Ascending aorta (tissue), 2 donors: ENCODE measurements at regions of chr7 and their contacts with region 1.

Region 1: GRCh38 chr7:98617051-98617959 is at the start of gene NPTX2:
- DNase-seq: peak in 1 of 2 donors; percentile 85
- H3K4me3 ChIP-seq: peak within 1 kb of the TSS; percentile 60 to 76
- H3K27ac ChIP-seq: peak within 1 kb of the TSS; percentile 46 to 57
- H3K4me1 ChIP-seq: peaks cover 4 to 11% of the 10 kb centered on the region in 2 donors
- H3K27me3 ChIP-seq: no peaks in the 10 kb centered on the region
- CTCF ChIP-seq: peak; percentile 18 to 50 (median 30)
- total RNA-seq, gene NPTX2: 44.2 TPM

Region 2: GRCh38 chr7:98434095-98434494 is 183.2 kb before region 1 on chr7:
- intact Hi-C with region 1: loop called (anchors 5 kb)
- DNase-seq: no peak
- H3K4me3 ChIP-seq: no peak overlapping the region
- H3K27ac ChIP-seq: no peak overlapping the region
- H3K4me1 ChIP-seq: no peaks in the 10 kb centered on the region
- H3K27me3 ChIP-seq: no peaks in the 10 kb centered on the region
- CTCF ChIP-seq: no peak

Region 3: DNA sequence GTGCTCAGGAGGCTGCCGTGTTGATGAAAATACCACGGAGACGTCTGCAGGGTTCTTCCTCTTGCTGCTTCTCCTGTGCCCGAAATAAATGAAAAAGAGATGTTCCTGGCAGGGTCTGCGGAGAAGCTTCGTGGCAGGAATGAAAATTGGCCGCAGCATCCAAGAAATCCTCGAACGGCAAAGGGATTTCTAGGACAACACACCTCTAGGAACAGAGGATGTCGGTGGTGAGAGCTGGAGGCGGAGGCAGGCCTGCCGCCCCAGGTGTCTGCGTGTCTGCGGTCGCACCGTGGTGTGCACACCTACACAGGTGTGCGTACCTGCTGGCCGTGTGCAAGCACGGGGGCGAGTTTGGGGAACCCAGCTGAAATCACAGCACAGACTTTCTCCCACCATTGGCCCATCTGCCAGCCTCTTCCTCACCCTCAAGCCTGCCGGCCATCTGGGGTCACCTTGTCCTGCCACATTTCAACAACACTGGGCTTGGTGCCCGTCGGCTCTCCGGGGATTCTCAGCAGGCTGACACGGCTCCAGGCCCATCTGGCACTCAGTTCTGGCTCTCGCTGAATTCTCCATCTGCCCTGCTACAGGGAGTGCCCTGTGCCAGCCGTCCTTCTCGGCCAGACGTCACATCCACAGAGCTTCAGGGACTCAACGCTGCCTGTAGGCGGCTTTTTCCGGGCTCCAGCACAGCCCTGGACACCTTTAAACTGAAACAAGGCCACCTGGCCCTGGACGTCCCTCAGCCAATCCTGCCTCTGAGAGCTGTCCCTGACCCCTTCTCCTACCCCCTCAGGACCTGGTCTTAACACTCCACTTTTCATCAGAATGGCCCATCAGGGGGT is 209.3 kb after region 1 on chr7:
- intact Hi-C with region 1: loop called (anchors 5 kb)
- DNase-seq: peak; percentile 65 to 96
- H3K4me3 ChIP-seq: peak overlapping the region in 1 of 2 donors; percentile 10
- H3K27ac ChIP-seq: peak overlapping the region; percentile 81
- H3K4me1 ChIP-seq: peaks cover 4 to 14% of the 10 kb centered on the region in 2 donors
- H3K27me3 ChIP-seq: no peaks in the 10 kb centered on the region
- CTCF ChIP-seq: peak; percentile 37 to 56 (median 42)

Region 4: DNA sequence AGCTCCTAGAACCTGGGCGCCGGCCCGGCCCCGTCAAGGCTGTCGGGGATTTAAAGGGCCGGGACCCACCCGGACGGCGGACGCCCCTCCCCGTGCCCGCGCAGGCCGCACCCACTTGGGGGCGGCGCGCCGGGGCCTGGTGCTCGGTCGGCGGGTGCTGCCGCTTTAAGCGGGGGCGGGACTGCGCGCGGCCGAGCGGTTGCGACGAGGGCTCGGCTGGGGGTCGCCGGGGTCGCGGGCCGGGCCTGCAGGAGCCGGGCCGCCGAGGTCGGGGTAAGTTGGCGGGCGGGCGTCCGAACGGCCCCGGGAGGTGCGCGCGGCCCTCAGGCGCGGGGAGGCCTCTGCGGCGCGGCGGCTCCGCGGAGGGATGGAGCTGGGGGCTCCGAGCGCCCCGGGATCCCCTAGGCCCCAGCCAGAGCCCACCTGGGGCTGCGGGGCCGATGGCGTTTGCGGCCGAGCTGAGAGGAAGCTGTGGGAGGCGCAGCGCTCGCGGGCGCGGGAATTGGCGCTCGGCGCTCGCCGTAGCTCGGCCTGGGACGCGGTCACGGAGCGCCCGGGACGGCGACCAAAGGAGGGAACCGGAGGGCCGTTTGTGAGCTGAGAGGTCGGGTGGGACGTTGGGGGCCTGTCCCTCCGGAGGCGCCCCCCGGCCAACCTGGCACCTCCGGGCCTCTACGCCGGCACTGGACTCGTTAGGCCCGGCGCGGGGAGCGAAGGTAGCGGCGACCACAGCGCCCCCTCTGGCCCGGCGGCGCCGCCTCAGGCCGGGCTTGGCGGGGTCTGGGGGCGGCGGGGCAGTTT is 261.3 kb after region 1 on chr7 and contains the start of gene TRRAP:
- intact Hi-C with region 1: loop called (anchors 2 kb)
- DNase-seq: peak in 1 of 2 donors; percentile 82
- H3K4me3 ChIP-seq: peak within 1 kb of the TSS; percentile 85 to 93
- H3K27ac ChIP-seq: peak within 1 kb of the TSS; percentile 92 to 93
- H3K4me1 ChIP-seq: peaks cover 2 to 12% of the 10 kb centered on the region in 2 donors
- H3K27me3 ChIP-seq: no peaks in the 10 kb centered on the region
- CTCF ChIP-seq: peak; percentile 90 to 100 (median 99)
- total RNA-seq, gene TRRAP: 23.4 TPM

Region 5: DNA sequence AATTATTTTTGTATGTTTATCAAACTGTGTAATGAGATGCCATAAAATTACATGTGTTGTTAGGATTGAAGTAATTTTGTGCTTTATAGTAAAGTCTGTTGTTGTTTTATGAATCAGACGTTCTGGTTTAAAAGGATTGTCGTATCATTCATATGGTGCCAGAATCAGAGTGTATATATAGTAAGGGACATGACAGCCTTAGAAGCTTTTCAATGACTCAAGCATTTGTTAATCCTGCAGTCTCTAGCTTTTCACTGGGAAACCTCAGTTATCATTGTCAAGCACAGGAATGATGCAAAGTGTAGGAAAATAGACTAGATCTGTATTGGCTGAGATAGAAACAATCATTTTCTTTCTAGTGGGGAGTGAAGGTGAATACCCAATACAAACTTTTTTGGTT is 318.5 kb after region 1 on chr7:
- intact Hi-C with region 1: no loop called
- DNase-seq: no peak
- H3K4me3 ChIP-seq: no peak overlapping the region
- H3K27ac ChIP-seq: no peak overlapping the region
- H3K4me1 ChIP-seq: no peaks in the 10 kb centered on the region
- H3K27me3 ChIP-seq: no peaks in the 10 kb centered on the region
- CTCF ChIP-seq: no peak

Region 6: GRCh38 chr7:99167072-99167471 is 549.8 kb after region 1 on chr7:
- intact Hi-C with region 1: no loop called
- DNase-seq: no peak
- H3K4me3 ChIP-seq: no peak overlapping the region
- H3K27ac ChIP-seq: no peak overlapping the region
- H3K4me1 ChIP-seq: no peaks in the 10 kb centered on the region
- H3K27me3 ChIP-seq: no peaks in the 10 kb centered on the region
- CTCF ChIP-seq: no peak